Ascending aorta (tissue), 2 donors: ENCODE measurements at regions of chr2 and their contacts with region 1.

Region 1: GRCh38 chr2:215601990-215602721 is 166.3 kb upstream of the FN1 start:
- DNase-seq: no peak
- H3K4me3 ChIP-seq: no peak overlapping the region
- H3K27ac ChIP-seq: peak overlapping the region in 1 of 2 donors; percentile 51
- H3K4me1 ChIP-seq: peaks cover 4 to 6% of the 10 kb centered on the region in 2 donors
- H3K27me3 ChIP-seq: no peaks in the 10 kb centered on the region
- CTCF ChIP-seq: no peak

Region 2: GRCh38 chr2:215537611-215538010 is 64.5 kb before region 1 on chr2:
- intact Hi-C with region 1: loop called (anchors 5 kb)
- DNase-seq: no peak
- H3K4me3 ChIP-seq: no peak overlapping the region
- H3K27ac ChIP-seq: no peak overlapping the region
- H3K4me1 ChIP-seq: peaks cover 3 to 26% of the 10 kb centered on the region in 2 donors
- H3K27me3 ChIP-seq: no peaks in the 10 kb centered on the region
- CTCF ChIP-seq: no peak

Region 3: DNA sequence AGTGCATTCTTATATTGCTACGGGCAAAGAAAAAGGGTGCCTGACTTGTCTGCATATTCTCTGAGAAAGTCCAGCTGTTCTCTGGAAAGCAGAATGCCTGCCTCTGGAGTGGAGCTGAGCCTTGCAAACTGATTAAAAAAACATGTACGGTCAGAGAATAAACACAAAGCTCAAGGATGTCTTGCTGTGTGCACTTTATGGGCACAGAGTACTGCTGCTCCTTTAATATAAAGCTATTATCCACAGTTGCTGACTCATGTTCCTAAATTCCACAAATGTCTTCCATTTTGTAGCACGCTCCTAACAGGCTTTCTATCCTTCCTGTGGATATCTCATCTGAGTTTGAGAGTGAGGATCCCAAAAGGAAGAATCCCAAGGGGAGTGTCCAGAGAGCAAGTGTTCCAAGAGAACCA is 182.2 kb after region 1 on chr2:
- intact Hi-C with region 1: no loop called
- DNase-seq: no peak
- H3K4me3 ChIP-seq: no peak overlapping the region
- H3K27ac ChIP-seq: peak overlapping the region; percentile 1 to 44
- H3K4me1 ChIP-seq: peaks cover 0 to 6% of the 10 kb centered on the region in 2 donors
- H3K27me3 ChIP-seq: no peaks in the 10 kb centered on the region
- CTCF ChIP-seq: no peak